Stomach (tissue), 19 donors: ENCODE measurements at regions of chr10 and their contacts with region 1.

Region 1: DNA sequence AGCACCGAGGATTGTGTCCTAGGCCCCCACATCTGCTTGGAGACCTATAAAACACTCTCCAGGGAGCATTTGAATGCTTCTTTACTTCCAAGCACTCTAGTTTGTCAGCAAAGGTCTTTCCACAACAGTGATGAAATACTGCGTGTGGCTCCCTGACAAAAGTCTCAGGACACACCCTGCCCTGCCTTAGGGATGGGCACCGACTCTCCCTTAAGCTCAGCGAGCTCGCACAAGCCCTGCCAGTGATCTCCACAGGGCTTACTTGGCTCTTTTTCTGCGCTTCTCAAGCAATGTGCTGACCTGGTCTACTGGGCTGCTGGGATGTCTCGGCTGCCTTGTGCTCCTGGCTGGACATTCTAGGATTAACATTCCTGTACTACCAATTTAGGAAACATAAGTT is 84.3 kb upstream of the MPP7 start:
- DNase-seq: peak in 1 of 2 donors; percentile 39
- H3K4me3 ChIP-seq: no peak overlapping the region
- H3K27ac ChIP-seq: no peak overlapping the region
- H3K4me1 ChIP-seq: peaks cover 0 to 3% (median under 1%) of the 10 kb centered on the region in 4 donors
- H3K27me3 ChIP-seq: no peaks in the 10 kb centered on the region
- CTCF ChIP-seq: no peak
- EP300 ChIP-seq: no peak
- POLR2A ChIP-seq: no peak

Region 2: GRCh38 chr10:27865221-27865638 is 521.9 kb before region 1 on chr10:
- intact Hi-C with region 1: no loop called
- DNase-seq: no peak
- H3K4me3 ChIP-seq: no peak overlapping the region
- H3K27ac ChIP-seq: no peak overlapping the region
- H3K4me1 ChIP-seq: no peaks in the 10 kb centered on the region
- H3K27me3 ChIP-seq: no peaks in the 10 kb centered on the region
- CTCF ChIP-seq: no peak
- EP300 ChIP-seq: no peak
- POLR2A ChIP-seq: no peak

Region 3: DNA sequence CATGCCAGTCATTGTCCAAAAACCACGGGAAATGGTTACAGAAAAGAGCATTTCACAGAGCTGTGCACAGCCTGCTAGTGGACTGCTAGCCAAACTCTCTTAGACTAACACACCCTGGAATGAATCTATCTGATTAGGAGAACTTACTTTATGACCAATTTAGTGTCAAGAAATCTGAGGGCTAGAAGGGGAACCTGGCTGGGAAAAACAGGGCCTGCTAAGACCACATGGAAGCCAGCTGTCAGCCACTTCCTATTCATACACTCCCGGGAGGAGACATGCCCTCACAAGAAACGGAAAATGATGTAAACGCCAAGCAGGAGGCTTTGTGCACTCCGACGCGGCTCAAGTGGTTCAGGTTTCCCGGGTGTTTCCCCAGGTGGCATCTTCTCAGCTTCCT is 139.0 kb before region 1 on chr10:
- intact Hi-C with region 1: loop called (anchors 5 kb)
- DNase-seq: peak in 1 of 2 donors; percentile 40
- H3K4me3 ChIP-seq: no peak overlapping the region
- H3K27ac ChIP-seq: no peak overlapping the region
- H3K4me1 ChIP-seq: peaks cover 0 to 18% (median 6%) of the 10 kb centered on the region in 4 donors
- H3K27me3 ChIP-seq: no peaks in the 10 kb centered on the region
- CTCF ChIP-seq: no peak
- EP300 ChIP-seq: no peak
- POLR2A ChIP-seq: no peak